ENCODE measurements at regions of chr18 and their contacts with region 1.

Region 1: DNA sequence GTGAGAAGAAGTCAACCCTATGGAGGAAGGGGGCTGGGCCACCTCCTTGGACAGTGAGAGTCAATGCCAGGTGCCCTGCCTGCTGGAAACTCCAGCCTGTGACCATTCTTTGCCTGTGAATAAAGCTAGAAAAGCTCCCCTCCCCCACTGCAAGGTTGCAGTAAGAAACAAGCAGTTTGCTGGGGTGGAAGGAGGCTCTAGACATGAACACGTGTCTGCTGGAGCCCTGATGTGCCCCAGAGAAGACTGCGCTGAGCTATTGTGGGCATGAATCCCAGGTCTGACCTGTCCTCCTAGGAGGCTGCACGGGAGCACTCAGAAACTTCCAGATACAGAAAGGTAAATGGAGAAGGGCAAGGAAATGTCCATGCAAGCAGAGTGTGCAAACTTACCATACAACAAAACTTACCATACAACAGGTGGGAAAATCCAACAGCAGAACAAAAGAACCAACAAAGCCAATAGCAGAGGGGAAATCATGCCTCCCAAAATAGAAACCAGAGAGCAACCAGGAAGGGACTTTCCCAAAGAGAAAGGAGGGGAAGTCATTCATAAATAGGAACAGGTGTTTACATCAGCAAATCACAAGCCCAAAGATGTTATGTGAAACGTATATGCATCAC is 278.7 kb downstream of the BCL2 start:
- DNase-seq: peak; percentile 53
- H3K4me3 Mint-ChIP-seq: peak overlapping the region; percentile 1
- H3K27ac Mint-ChIP-seq: peak overlapping the region; percentile 51
- H3K4me1 Mint-ChIP-seq: peaks cover 25% of the 10 kb centered on the region
- H3K27me3 Mint-ChIP-seq: no peaks in the 10 kb centered on the region

Region 2: GRCh38 chr18:63054901-63055584 is 14.1 kb after region 1 on chr18:
- CTCF ChIA-PET with region 1: no interaction called
- intact Hi-C with region 1: no loop called
- DNase-seq: no peak
- H3K4me3 Mint-ChIP-seq: no peak overlapping the region
- H3K27ac Mint-ChIP-seq: no peak overlapping the region
- H3K4me1 Mint-ChIP-seq: peaks cover 7% of the 10 kb centered on the region
- H3K27me3 Mint-ChIP-seq: no peaks in the 10 kb centered on the region

Region 3: DNA sequence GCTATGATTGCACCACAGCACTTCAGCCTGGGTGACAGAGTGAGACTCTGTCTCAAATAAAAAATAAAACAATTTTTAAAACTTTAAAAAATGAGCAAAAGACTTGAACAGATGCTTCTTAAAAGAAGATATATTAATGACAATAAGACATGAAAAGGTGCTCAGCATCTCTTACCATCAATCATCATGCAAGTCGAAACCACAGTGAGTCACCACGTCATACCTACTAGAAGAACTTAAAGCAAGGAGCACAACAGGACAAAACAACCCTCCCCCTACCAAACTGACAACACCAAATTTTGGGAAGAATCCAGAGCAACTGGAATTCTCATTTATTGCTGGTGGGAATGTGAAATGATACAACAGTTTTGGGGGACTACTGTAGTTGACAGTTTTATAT is 27.0 kb after region 1 on chr18:
- CTCF ChIA-PET with region 1: no interaction called
- intact Hi-C with region 1: loop called (anchors 2 kb)
- DNase-seq: peak; percentile 42
- H3K4me3 Mint-ChIP-seq: no peak overlapping the region
- H3K27ac Mint-ChIP-seq: no peak overlapping the region
- H3K4me1 Mint-ChIP-seq: peaks cover 8% of the 10 kb centered on the region
- H3K27me3 Mint-ChIP-seq: no peaks in the 10 kb centered on the region

Region 4: GRCh38 chr18:63105636-63106316 is 64.9 kb after region 1 on chr18:
- CTCF ChIA-PET with region 1: no interaction called
- intact Hi-C with region 1: loop called (anchors 2 kb)
- DNase-seq: no peak
- H3K4me3 Mint-ChIP-seq: no peak overlapping the region
- H3K27ac Mint-ChIP-seq: no peak overlapping the region
- H3K4me1 Mint-ChIP-seq: peaks cover 27% of the 10 kb centered on the region
- H3K27me3 Mint-ChIP-seq: no peaks in the 10 kb centered on the region

Measured in activated naive CD4-positive, alpha-beta T cell treated with anti-CD3 and anti-CD28 coated beads for 36 hours (primary cell).